HepG2 (cell line): ENCODE measurements at regions of chr2 and their contacts with region 1.

Region 1: GRCh38 chr2:177392373-177393202 is at the start of gene AGPS:
- DNase-seq: peak; percentile 73
- ATAC-seq: peak; percentile 93
- H3K4me3 ChIP-seq: peak within 1 kb of the TSS; percentile 91 to 98 (median 92)
- H3K27ac ChIP-seq: peak within 1 kb of the TSS; percentile 86
- H3K4me1 ChIP-seq: peaks cover 56% of the 10 kb centered on the region
- H3K27me3 ChIP-seq: no peaks in the 10 kb centered on the region; a peak in 1 of 5 replicates
- CTCF ChIP-seq: peak; percentile 29; the same call in 1 of the 2 replicates
- EP300 ChIP-seq: peak in 1 of 2 experiments; percentile 35; a peak in 1 of 4 replicates
- POLR2A ChIP-seq: peak; percentile 79 to 94
- RAD21 ChIP-seq: peak; percentile 77
- total RNA-seq, gene AGPS: 99.0 and 159 TPM in 2 replicates

Region 2: DNA sequence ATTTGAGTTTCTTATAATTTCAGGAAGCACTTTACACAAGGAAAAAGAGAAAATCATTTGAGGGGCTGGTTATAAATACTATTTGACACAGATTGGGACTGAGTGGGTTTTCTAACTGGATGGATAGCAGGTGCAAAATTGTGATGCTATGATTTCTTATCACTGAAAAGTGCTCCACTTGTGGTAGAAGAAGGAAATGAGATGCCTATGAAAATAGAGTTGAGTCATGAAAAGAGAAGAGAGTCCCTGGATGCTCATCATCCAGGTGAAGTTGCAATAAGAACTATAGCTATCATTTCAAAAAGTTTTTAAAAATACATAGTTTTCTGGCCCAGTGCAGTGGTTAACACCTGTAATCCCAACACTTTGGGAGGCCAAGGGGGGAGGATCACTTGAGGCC is 88.6 kb before region 1 on chr2:
- CTCF ChIA-PET with region 1: no interaction called
- POLR2A ChIA-PET with region 1: no interaction called
- in situ Hi-C with region 1: no loop called
- intact Hi-C with region 1: no loop called
- DNase-seq: no peak
- ATAC-seq: no peak
- H3K4me3 ChIP-seq: no peak overlapping the region
- H3K27ac ChIP-seq: no peak overlapping the region
- H3K4me1 ChIP-seq: no peaks in the 10 kb centered on the region
- H3K27me3 ChIP-seq: no peaks in the 10 kb centered on the region
- CTCF ChIP-seq: no peak
- EP300 ChIP-seq: no peak
- POLR2A ChIP-seq: no peak
- RAD21 ChIP-seq: no peak

Region 3: DNA sequence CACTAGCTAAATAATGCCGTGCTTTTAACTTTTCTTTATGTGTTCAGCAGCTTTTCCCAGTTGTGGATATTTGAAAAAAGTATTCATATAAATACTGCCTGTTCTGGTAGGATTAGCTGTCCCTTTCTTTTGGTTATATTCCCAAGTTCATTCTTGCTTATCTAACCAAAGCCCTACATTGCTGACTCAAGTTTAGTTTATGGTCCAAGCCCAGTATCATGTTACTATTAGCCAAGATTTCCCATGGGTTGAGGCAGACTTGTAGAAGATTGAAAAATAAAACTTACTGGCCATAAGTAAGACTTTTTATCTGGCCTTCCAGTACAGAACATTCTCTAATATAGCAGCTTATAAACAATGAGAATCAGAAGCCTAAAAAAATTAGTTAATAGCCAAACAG is 78.4 kb before region 1 on chr2:
- CTCF ChIA-PET with region 1: no interaction called
- POLR2A ChIA-PET with region 1: no interaction called
- in situ Hi-C with region 1: no loop called
- intact Hi-C with region 1: no loop called
- DNase-seq: no peak
- ATAC-seq: no peak
- H3K4me3 ChIP-seq: no peak overlapping the region
- H3K27ac ChIP-seq: no peak overlapping the region
- H3K4me1 ChIP-seq: peaks cover 48% of the 10 kb centered on the region
- H3K27me3 ChIP-seq: no peaks in the 10 kb centered on the region
- CTCF ChIP-seq: no peak
- EP300 ChIP-seq: no peak
- POLR2A ChIP-seq: no peak
- RAD21 ChIP-seq: no peak

Region 4: GRCh38 chr2:177405029-177405692 is 12.6 kb after region 1 on chr2:
- CTCF ChIA-PET with region 1: no interaction called
- POLR2A ChIA-PET with region 1: interaction called, 21 read pairs
- in situ Hi-C with region 1: no loop called
- intact Hi-C with region 1: no loop called
- DNase-seq: peak; percentile 82
- ATAC-seq: peak; percentile 92
- H3K4me3 ChIP-seq: no peak overlapping the region
- H3K27ac ChIP-seq: peak overlapping the region; percentile 13
- H3K4me1 ChIP-seq: peaks cover 98% of the 10 kb centered on the region
- H3K27me3 ChIP-seq: no peaks in the 10 kb centered on the region
- CTCF ChIP-seq: no peak
- EP300 ChIP-seq: peak in 1 of 2 experiments; percentile 37; a peak in 1 of 4 replicates
- POLR2A ChIP-seq: no peak
- RAD21 ChIP-seq: no peak

Region 5: DNA sequence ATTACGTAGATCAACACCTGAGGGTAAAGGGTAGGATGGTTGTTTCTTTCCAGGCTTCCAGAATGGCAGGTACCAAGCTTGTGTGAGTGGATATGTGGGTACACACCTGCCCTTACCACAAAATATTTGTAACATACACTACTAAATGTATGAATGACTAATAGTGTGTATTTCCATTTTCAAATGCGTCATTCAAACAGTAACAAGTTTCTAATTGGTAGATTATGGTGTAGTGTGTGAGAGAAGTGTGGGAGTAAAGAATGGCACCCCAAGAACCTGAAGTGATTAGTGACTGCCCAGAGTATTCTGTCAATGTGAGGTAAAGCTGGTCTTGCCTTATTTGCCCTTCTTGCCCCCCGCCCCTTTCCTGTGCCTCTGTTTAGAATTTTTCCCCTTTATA is 21.1 kb after region 1 on chr2:
- CTCF ChIA-PET with region 1: no interaction called
- POLR2A ChIA-PET with region 1: interaction called, 13 read pairs
- in situ Hi-C with region 1: no loop called
- intact Hi-C with region 1: loop called (anchors 2 kb)
- DNase-seq: no peak
- ATAC-seq: no peak
- H3K4me3 ChIP-seq: no peak overlapping the region
- H3K27ac ChIP-seq: peak overlapping the region; percentile 1
- H3K4me1 ChIP-seq: peaks cover 61% of the 10 kb centered on the region
- H3K27me3 ChIP-seq: no peaks in the 10 kb centered on the region
- CTCF ChIP-seq: no peak
- EP300 ChIP-seq: no peak
- POLR2A ChIP-seq: no peak
- RAD21 ChIP-seq: no peak

Region 6: GRCh38 chr2:177419274-177419673 is 26.7 kb after region 1 on chr2:
- CTCF ChIA-PET with region 1: no interaction called
- POLR2A ChIA-PET with region 1: interaction called, 13 read pairs
- in situ Hi-C with region 1: no loop called
- intact Hi-C with region 1: loop called (anchors 2 kb)
- DNase-seq: no peak
- ATAC-seq: no peak
- H3K4me3 ChIP-seq: no peak overlapping the region
- H3K27ac ChIP-seq: no peak overlapping the region
- H3K4me1 ChIP-seq: peaks cover 58% of the 10 kb centered on the region
- H3K27me3 ChIP-seq: no peaks in the 10 kb centered on the region
- CTCF ChIP-seq: no peak
- EP300 ChIP-seq: no peak
- POLR2A ChIP-seq: no peak
- RAD21 ChIP-seq: no peak

Region 7: GRCh38 chr2:177455187-177455586 is 62.6 kb after region 1 on chr2:
- CTCF ChIA-PET with region 1: no interaction called
- POLR2A ChIA-PET with region 1: no interaction called
- in situ Hi-C with region 1: no loop called
- intact Hi-C with region 1: no loop called
- DNase-seq: peak; percentile 32
- ATAC-seq: peak; percentile 85
- H3K4me3 ChIP-seq: no peak overlapping the region
- H3K27ac ChIP-seq: peak overlapping the region; percentile 15
- H3K4me1 ChIP-seq: peaks cover 18% of the 10 kb centered on the region
- H3K27me3 ChIP-seq: no peaks in the 10 kb centered on the region
- CTCF ChIP-seq: no peak
- EP300 ChIP-seq: no peak
- POLR2A ChIP-seq: no peak
- RAD21 ChIP-seq: no peak

Region 8: DNA sequence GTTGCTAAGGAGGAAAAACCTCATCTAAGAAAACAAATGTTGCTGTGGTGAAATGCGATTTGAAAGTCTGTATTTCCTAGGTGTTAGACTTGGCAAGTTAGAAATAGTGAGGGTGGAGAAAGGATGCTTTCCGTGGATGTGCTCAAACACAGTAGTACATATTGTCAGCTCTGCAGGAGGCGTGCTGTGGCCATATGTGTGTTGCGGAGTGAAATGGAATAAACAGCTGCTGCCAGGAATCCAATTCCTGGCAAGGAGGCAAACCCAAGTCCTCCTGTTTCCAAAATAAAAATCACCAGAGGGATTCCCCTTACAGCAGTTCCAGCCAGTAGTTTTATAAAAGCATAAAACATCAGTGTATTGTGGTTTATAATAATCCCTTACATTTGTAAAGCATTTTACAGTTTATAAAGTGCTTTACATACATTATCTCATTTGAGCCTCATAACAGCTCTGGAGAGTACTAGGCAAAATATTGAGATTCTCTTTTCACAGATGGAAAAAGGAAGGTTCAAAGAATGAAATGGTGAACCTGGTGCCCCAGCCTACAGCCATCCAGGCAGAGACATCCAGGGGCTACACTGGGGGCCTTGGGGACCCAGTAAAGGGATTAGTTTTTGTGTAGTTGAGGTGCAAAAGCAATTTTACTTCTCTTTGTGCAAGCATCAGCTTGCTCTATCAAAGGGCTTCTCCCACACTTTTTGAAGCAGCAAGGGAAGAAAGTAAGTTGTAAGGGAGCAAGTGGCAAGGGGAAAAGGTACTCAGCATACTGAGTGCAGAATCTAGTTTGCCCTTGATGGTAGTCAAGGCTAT is 205.9 kb after region 1 on chr2:
- CTCF ChIA-PET with region 1: no interaction called
- POLR2A ChIA-PET with region 1: no interaction called
- in situ Hi-C with region 1: no loop called
- intact Hi-C with region 1: loop called (anchors 1 kb)
- DNase-seq: no peak
- ATAC-seq: peak; percentile 12
- H3K4me3 ChIP-seq: 0 out of 6 replicates have a peak overlapping the region, but pooled peaks of 1 of the 3 experiments have one; percentile 2
- H3K27ac ChIP-seq: peak overlapping the region; percentile 70
- H3K4me1 ChIP-seq: peaks cover 79% of the 10 kb centered on the region
- H3K27me3 ChIP-seq: no peaks in the 10 kb centered on the region
- CTCF ChIP-seq: no peak
- EP300 ChIP-seq: 0 out of 4 replicates have a peak, but pooled peaks of 1 of the 2 experiments have one; percentile 13
- POLR2A ChIP-seq: no peak; a peak in 1 of 4 replicates
- RAD21 ChIP-seq: no peak

Region 9: GRCh38 chr2:177972782-177973181 is 580.2 kb after region 1 on chr2:
- CTCF ChIA-PET with region 1: no interaction called
- POLR2A ChIA-PET with region 1: no interaction called
- in situ Hi-C with region 1: no loop called
- intact Hi-C with region 1: no loop called
- DNase-seq: no peak
- ATAC-seq: no peak
- H3K4me3 ChIP-seq: no peak overlapping the region
- H3K27ac ChIP-seq: no peak overlapping the region
- H3K4me1 ChIP-seq: peaks cover 33% of the 10 kb centered on the region
- H3K27me3 ChIP-seq: no peaks in the 10 kb centered on the region
- CTCF ChIP-seq: no peak
- EP300 ChIP-seq: no peak
- POLR2A ChIP-seq: no peak
- RAD21 ChIP-seq: no peak